Sciatic nerve (tissue), 2 donors: ENCODE measurements at regions of chr2 and their contacts with region 1.

Region 1: GRCh38 chr2:220442012-220442411 is 814.6 kb downstream of the SLC4A3 start:
- DNase-seq: no peak
- ATAC-seq: no peak

Region 2: DNA sequence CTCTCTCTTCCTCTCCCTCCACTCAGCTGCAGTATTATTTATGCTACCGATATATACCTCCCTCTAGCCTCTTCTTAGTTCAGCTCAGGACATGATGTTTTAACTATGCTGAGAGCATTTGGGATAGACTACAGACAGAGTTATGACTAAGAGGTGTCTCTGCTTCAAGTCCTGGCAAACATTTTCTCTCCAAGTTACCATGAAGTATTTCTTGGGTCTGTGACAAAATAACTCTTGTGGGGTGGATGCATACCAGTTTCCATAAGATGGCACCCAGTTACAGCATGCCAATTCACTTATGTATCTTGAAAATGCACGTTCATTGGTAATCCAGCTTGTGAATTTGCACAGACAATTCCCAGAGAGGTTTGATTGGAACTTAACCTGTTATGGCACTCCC is 77.0 kb before region 1 on chr2:
- intact Hi-C with region 1: no loop called
- DNase-seq: no peak
- ATAC-seq: no peak

Region 3: DNA sequence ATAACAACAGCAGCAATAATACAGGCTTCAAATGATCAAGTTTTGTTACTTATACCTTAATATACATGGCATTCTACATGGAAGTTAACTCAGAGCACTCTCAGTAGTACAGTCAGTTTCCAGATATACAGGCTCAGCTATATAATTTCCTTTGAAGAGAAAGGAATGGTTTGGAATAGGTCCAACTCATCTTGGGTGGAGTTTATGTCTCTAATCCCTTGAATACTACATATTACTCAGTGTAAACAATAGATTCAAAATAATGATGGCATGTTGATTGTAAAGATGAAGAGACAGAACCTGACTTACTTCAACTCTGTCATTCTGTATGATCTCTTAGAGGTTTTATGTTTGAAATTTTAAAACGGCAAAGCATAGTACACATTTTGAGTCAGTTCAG is 955.2 kb after region 1 on chr2:
- intact Hi-C with region 1: loop called (anchors 5 kb)
- DNase-seq: no peak
- ATAC-seq: no peak